ENCODE measurements at regions of chr19 and their contacts with region 1.

Region 1: DNA sequence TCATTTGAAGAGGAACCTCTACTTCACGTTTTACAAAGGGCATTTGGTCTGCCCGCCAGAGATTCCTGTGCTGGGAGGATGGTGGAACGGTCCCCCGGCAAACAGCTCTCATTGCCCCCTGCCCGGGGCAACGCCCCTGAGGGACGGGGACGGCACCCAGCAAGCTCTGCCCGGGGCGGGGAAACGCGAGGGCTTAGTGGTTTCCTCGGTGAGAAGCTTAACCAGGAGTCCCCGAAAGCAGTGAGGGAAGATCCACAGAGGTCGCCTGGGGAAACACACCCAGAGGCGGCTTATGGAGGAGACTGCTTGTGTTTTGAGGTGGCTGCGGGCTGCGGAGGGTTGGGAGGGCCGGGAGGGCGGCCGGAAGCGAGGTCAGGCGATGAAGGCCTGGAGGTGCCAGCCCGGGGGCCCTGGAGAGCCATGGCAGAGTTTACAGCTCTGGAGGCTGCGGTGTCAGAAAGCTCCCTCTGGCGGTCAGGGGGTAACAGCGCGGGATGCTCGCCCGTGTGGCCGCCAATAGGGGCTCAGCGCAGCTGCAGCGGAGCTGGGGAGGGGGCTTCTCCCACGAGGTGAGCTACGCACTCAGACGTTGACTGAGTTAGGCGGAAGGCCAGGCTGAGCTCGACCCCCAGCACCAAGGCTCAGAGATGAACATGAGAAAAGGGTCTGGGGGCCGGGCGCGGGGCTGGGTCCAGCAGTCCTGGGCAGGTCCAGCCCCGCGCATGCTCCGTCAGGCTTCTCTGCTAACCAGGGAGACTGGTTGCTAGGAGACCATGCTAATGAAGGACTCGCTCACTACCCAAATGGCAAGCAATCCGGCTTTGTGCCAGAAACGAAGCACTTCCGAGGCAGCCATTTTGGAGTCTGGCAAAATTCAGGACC is 652 bp upstream of the TPGS1 start:
- DNase-seq: peak; percentile 100
- H3K4me3 Mint-ChIP-seq: peak overlapping the region; percentile 82
- H3K27ac Mint-ChIP-seq: peak overlapping the region; percentile 98
- H3K4me1 Mint-ChIP-seq: peaks cover 24% of the 10 kb centered on the region
- H3K27me3 Mint-ChIP-seq: no peaks in the 10 kb centered on the region
- CTCF ChIP-seq: peak; percentile 95

Region 2: GRCh38 chr19:262125-262524 is 244.5 kb before region 1 on chr19:
- CTCF ChIA-PET with region 1: interaction called, 10 read pairs
- POLR2A ChIA-PET with region 1: no interaction called
- intact Hi-C with region 1: no loop called
- DNase-seq: no peak
- H3K4me3 Mint-ChIP-seq: no peak overlapping the region
- H3K27ac Mint-ChIP-seq: no peak overlapping the region
- H3K4me1 Mint-ChIP-seq: peaks cover 10% of the 10 kb centered on the region
- H3K27me3 Mint-ChIP-seq: peaks cover 42% of the 10 kb centered on the region
- CTCF ChIP-seq: no peak

Region 3: DNA sequence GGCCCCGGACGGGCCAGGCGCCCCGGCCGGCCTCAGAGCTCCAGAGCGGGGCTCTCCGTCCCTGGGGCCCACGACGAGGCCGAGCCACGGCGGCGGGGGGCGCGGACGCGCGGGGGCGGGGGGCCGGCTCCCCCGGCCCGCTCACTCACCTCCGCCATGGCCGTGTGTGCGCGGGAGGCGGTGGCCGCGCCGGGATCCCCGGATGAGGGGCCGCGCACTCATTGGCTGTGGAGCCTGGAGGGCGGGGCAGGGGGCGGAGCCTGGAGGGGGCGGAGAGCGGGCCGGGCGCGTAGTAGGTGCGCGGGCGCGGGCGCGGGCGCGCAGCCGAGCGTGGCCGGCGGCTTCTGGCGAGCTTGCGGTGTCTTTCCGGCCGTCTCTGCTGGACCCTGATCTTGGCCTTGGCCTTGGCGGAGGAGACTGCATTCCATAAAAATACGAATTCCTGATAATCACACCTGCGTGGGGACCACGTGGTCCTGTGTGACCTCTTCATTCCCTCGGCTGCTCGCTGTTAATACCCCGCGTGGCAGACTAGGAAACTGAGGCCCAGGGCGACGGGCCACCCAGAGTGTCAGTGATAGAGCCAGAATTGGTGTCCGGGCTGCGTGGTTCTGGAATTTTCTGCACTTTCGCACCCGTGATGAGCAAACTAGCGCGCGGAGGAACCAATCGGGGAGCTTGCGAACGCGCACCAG is 161.9 kb before region 1 on chr19 and contains the start of gene MIER2:
- CTCF ChIA-PET with region 1: interaction called, 6 read pairs
- POLR2A ChIA-PET with region 1: interaction called, 8 read pairs
- intact Hi-C with region 1: loop called (anchors 5 kb)
- DNase-seq: peak; percentile 79
- H3K4me3 Mint-ChIP-seq: peak within 1 kb of the TSS; percentile 72
- H3K27ac Mint-ChIP-seq: peak within 1 kb of the TSS; percentile 57
- H3K4me1 Mint-ChIP-seq: peaks cover 37% of the 10 kb centered on the region
- H3K27me3 Mint-ChIP-seq: no peaks in the 10 kb centered on the region
- CTCF ChIP-seq: no peak
- total RNA-seq, gene MIER2: 24.2 TPM in 2 replicates

Region 4: GRCh38 chr19:383922-384798 is 122.5 kb before region 1 on chr19:
- CTCF ChIA-PET with region 1: no interaction called
- POLR2A ChIA-PET with region 1: no interaction called
- intact Hi-C with region 1: loop called (anchors 10 kb)
- DNase-seq: no peak
- H3K4me3 Mint-ChIP-seq: no peak overlapping the region
- H3K27ac Mint-ChIP-seq: no peak overlapping the region
- H3K4me1 Mint-ChIP-seq: peaks cover 22% of the 10 kb centered on the region
- H3K27me3 Mint-ChIP-seq: no peaks in the 10 kb centered on the region
- CTCF ChIP-seq: no peak

Region 5: GRCh38 chr19:488505-489417 is 17.9 kb before region 1 on chr19:
- CTCF ChIA-PET with region 1: interaction called, 3 read pairs
- POLR2A ChIA-PET with region 1: interaction called, 14 read pairs
- intact Hi-C with region 1: loop called (anchors 2 kb)
- DNase-seq: peak; percentile 93
- H3K4me3 Mint-ChIP-seq: peak overlapping the region; percentile 72
- H3K27ac Mint-ChIP-seq: peak overlapping the region; percentile 59
- H3K4me1 Mint-ChIP-seq: peaks cover 6% of the 10 kb centered on the region
- H3K27me3 Mint-ChIP-seq: no peaks in the 10 kb centered on the region
- CTCF ChIP-seq: no peak

Region 6: DNA sequence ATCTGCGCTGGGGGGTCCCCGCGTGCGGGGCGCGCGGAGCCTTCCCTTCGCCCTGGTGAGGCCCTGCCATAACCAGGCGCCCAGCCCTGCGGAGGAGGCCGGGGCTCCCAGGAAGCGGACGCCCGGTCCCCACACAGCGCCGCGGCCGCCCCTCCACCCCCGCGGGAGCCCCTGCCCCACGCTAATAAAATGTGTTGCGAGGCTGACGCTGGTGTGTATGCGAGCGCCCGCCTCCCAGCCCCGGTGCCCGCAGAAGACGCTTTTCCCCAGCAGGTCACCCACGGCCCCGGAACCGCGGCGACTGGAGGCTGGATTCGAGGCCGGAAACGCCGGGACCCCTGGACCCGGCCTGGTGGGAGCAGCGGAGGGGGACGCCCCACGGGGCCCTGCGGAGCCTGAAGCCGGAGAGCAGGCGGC is 12.8 kb after region 1 on chr19:
- CTCF ChIA-PET with region 1: interaction called, 24 read pairs
- POLR2A ChIA-PET with region 1: no interaction called
- intact Hi-C with region 1: no loop called
- DNase-seq: no peak
- H3K4me3 Mint-ChIP-seq: no peak overlapping the region
- H3K27ac Mint-ChIP-seq: no peak overlapping the region
- H3K4me1 Mint-ChIP-seq: no peaks in the 10 kb centered on the region
- H3K27me3 Mint-ChIP-seq: no peaks in the 10 kb centered on the region
- CTCF ChIP-seq: no peak

Region 7: DNA sequence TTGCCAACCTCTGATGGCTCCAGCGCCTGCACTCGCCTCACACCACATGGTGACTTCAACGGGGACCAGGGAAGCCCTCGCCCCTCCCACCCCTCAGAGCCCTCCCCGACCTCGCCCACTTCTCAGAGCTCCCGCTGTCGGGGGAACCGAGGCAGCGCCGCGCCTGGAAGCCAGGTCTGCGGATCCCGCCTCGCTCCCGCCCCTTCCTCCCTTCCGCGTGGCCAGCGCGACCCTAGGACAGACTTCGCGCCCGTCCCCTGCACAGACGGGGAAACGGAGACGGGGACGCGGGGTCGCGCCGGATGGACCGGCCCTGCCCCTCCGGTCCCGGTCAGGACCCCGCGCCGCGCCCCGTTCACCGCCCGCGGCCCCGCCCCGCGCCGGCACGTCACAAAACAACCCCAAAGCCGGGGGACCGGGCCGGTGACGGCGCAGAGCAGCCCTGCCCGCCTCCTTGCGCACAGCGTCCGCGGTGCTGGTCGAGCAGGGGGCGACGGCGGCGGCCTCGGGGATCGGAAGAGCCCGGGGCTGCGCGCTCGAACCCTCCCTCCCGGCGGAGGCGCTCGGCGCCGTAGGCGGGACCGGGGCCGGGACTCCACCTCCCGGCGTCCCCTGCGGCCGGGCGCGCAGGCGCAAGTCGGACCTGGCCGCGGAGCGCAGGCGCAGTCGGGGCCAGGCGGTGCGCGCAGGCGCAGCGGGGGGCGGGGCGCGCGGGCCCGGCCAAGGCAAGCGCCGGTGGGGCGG is 24.5 kb after region 1 on chr19:
- CTCF ChIA-PET with region 1: interaction called, 9 read pairs
- POLR2A ChIA-PET with region 1: interaction called, 24 read pairs
- intact Hi-C with region 1: no loop called
- DNase-seq: peak; percentile 83
- H3K4me3 Mint-ChIP-seq: peak overlapping the region; percentile 74
- H3K27ac Mint-ChIP-seq: no peak overlapping the region
- H3K4me1 Mint-ChIP-seq: peaks cover 4% of the 10 kb centered on the region
- H3K27me3 Mint-ChIP-seq: no peaks in the 10 kb centered on the region
- CTCF ChIP-seq: no peak